ENCODE measurements at regions of chr17 and their contacts with region 1.

Region 1: DNA sequence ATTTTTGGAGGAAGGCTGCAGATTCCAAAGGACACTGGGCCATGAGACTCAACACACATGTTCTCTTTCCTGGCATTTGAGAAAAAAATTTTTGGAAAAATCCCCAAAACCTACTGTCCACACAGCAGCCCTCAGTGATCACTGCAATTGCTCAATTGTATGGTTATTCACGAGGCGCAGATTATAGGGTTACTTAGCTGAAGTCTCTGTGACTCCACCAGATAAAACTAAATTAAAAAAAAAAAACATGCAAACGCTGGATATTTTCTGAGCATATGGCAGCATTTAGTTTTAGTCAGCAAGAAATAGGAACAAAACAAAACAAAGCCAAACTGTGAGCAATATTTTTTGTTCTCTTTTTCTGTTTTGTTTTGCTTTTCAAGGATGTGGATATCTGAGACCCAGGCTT is 83.8 kb upstream of the FAM20A start:
- DNase-seq: no peak
- ATAC-seq: peak; percentile 76
- H3K4me3 ChIP-seq: no peak overlapping the region
- H3K27ac ChIP-seq: no peak overlapping the region
- H3K4me1 ChIP-seq: peaks cover 0 to 7% of the 10 kb centered on the region in 2 donors
- H3K27me3 ChIP-seq: no peaks in the 10 kb centered on the region

Region 2: DNA sequence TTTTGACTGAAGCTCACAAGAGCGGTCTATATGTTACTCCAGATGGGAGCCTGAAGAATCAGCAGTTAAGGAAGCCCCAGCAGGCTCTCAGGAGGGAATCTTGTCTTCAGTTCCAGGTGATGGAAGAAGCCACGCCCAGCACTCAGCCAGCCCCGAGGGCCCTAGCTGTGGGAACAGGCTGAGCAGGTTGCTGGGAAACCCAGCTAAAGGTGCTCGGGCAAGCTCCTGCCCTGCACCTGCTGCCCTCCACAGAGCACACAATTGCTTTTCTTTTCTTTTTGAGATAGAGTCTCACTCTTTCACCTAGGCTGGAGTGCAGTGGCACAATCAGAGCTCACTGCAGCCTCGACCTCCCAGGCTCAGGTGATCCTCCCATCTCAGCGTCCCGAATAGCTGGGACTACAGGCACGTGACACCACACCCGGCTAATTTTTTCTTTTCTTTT is 260.0 kb before region 1 on chr17:
- intact Hi-C with region 1: no loop called
- DNase-seq: no peak
- ATAC-seq: no peak
- H3K4me3 ChIP-seq: no peak overlapping the region
- H3K27ac ChIP-seq: no peak overlapping the region
- H3K4me1 ChIP-seq: no peaks in the 10 kb centered on the region
- H3K27me3 ChIP-seq: no peaks in the 10 kb centered on the region

Region 3: DNA sequence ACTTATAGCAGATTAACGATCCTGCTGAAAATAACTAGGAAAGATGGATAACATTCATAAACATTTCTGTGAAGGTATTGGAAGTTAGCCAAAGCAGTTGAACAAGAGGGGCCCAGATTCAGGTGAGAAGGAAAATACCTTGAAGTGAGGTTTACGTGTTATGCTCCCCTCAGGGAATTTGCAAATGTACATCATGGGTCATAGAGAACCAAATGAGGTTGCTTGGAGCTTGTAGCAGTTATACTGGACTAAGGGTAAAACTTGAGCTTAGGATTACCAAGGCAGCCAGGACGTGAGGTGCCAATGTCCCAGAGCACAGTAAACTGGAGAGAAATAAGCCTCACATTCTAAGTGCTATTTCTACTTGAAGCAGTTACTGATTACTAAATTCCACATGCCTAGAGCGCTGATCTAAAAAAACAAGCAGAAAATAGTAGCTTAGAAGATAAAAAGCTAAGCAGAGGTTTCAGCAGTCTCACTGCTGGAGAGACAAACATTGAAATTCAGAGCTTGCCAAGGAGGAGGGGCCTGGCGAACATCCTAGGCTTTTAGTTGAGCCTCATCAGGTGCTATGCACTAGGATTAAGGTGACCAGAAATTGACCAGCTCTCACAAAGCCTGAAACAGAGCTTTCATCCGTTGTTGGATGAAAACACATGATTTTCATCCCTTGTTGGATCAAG is 52.9 kb after region 1 on chr17:
- intact Hi-C with region 1: loop called in 1 of 2 experiments (anchors 5 kb)
- DNase-seq: no peak
- ATAC-seq: no peak
- H3K4me3 ChIP-seq: no peak overlapping the region
- H3K27ac ChIP-seq: no peak overlapping the region
- H3K4me1 ChIP-seq: peaks cover 7 to 8% of the 10 kb centered on the region in 2 donors
- H3K27me3 ChIP-seq: no peaks in the 10 kb centered on the region

Region 4: DNA sequence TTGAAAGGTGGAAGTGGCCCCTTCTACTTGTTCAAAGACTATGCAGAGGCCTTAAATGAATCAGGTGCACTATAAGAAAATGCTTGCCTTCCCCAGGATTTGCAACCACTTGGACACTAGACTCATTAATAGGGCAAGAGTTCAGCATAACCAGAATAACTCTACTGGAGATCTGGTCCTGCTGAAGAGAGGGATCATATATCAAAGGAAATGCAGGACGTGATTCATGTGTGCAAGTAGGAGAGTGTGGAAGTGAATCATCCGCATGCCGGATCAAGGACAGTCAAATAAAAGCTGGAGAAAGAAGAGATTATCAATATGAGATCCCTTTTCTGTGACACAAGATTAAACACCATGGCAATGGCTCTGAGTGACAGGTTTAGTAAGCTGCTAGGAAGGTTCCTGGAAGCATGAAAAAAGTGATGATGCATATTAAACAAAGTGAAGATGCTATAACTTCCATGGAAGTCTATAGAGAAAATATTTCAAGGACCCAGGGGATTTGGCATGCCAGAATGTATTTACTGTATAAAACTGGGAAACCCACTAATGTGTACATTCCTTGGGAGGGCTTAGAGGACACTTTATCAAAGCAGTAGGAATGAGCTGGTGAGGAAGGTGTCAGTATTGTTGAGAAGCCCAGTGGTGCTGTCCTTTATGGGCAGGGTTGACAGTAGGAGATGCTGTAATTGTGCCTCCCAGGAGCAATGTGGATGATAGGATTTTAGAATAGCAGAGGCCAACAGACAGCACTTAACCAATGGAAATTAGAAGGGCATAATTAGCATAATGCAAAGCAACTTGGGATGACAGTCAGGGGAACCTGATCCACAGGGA is 137.1 kb after region 1 on chr17:
- intact Hi-C with region 1: no loop called
- DNase-seq: no peak
- ATAC-seq: no peak
- H3K4me3 ChIP-seq: no peak overlapping the region
- H3K27ac ChIP-seq: no peak overlapping the region
- H3K4me1 ChIP-seq: no peaks in the 10 kb centered on the region
- H3K27me3 ChIP-seq: no peaks in the 10 kb centered on the region